ENCODE measurements at regions of chr4 and their contacts with region 1.

Region 1: DNA sequence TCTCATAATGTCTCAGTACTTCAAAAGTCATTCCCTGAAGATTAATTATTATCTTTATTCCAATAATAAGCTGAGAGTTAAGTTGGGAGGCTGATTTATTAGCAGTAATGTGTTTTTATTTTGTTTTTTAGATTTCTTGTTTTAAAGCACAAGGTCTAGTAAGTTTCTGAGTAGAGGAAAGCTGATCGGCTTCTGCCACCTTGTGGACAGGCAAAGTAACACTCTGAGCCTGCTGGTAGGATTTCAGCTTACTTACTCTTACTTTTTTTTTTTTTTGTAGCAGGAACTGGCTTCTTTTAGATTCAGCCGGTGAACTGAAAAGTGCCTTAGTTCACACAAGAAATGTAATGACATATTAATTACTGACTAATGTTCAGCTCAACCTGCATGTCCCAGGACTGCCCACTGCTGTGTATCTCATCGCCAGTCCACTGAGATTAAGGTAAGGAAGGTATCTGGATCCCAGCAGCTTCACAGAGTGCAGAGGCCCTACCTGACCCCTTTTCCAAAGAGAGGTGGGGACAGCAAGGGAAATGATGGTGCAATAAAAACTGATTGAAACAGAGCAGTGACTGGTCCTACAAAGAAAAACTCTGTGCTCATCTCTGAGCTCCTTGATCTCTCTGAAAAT is 126.5 kb downstream of the ADGRA3 start:
- DNase-seq: peak; percentile 78
- H3K4me3 ChIP-seq: no peak overlapping the region
- H3K27ac ChIP-seq: no peak overlapping the region
- H3K4me1 ChIP-seq: peaks cover 18% of the 10 kb centered on the region
- H3K27me3 ChIP-seq: no peaks in the 10 kb centered on the region
- CTCF ChIP-seq: peak; percentile 71
- POLR2A ChIP-seq: no peak

Region 2: DNA sequence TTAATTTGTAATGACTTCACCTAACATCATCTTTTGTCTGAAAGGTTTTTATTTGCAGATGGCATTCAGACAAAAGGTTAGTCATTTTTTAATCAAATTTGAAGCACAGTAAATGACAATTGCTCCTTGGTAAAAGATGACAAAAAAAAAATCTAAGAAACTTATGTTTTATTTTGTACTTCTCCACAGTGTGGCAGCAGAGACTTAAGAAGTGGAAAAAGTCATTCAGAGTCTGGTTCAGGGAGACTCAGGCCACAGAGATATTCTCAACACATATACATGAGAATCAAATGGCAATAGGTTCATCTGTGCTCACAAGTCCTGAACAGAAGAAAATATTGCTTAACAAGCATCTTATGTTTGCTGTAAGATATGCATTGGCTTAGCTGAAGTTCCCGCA is 877.0 kb before region 1 on chr4:
- CTCF ChIA-PET with region 1: interaction called, 9 read pairs
- POLR2A ChIA-PET with region 1: no interaction called
- dilution Hi-C with region 1: no loop called
- intact Hi-C with region 1: loop called (anchors 1 kb)
- DNase-seq: peak; percentile 71
- H3K4me3 ChIP-seq: no peak overlapping the region
- H3K27ac ChIP-seq: no peak overlapping the region
- H3K4me1 ChIP-seq: no peaks in the 10 kb centered on the region
- H3K27me3 ChIP-seq: peaks cover 34 to 55% of the 10 kb centered on the region in 2 experiments
- CTCF ChIP-seq: peak; percentile 15 to 17
- POLR2A ChIP-seq: no peak

Region 3: GRCh38 chr4:21948347-21949072 is 440.8 kb before region 1 on chr4 and contains the start of gene KCNIP4:
- CTCF ChIA-PET with region 1: interaction called, 6 read pairs
- POLR2A ChIA-PET with region 1: no interaction called
- dilution Hi-C with region 1: no loop called
- intact Hi-C with region 1: loop called (anchors 5 kb)
- DNase-seq: no peak
- H3K4me3 ChIP-seq: no peak within 1 kb of the TSS
- H3K27ac ChIP-seq: no peak within 1 kb of the TSS
- H3K4me1 ChIP-seq: no peaks in the 10 kb centered on the region
- H3K27me3 ChIP-seq: peaks cover 8 to 19% of the 10 kb centered on the region in 2 experiments
- CTCF ChIP-seq: no peak
- POLR2A ChIP-seq: no peak
- total RNA-seq, gene KCNIP4: not detected in 2 replicates

Region 4: GRCh38 chr4:22356987-22357596 is 32.3 kb before region 1 on chr4:
- CTCF ChIA-PET with region 1: interaction called, 10 read pairs
- POLR2A ChIA-PET with region 1: no interaction called
- dilution Hi-C with region 1: no loop called
- intact Hi-C with region 1: no loop called
- DNase-seq: peak; percentile 4
- H3K4me3 ChIP-seq: no peak overlapping the region
- H3K27ac ChIP-seq: no peak overlapping the region
- H3K4me1 ChIP-seq: no peaks in the 10 kb centered on the region
- H3K27me3 ChIP-seq: no peaks in the 10 kb centered on the region
- CTCF ChIP-seq: peak in 1 of 2 donors; percentile 16
- POLR2A ChIP-seq: no peak

Region 5: GRCh38 chr4:22607382-22607781 is 218.0 kb after region 1 on chr4:
- CTCF ChIA-PET with region 1: interaction called, 13 read pairs
- POLR2A ChIA-PET with region 1: no interaction called
- dilution Hi-C with region 1: no loop called
- intact Hi-C with region 1: no loop called
- DNase-seq: peak; percentile 29
- H3K4me3 ChIP-seq: no peak overlapping the region
- H3K27ac ChIP-seq: no peak overlapping the region
- H3K4me1 ChIP-seq: no peaks in the 10 kb centered on the region
- H3K27me3 ChIP-seq: no peaks in the 10 kb centered on the region
- CTCF ChIP-seq: peak; percentile 10 to 54
- POLR2A ChIP-seq: no peak

Measured in endothelial cell of umbilical vein (primary cell).